Calu3 (cell line): ENCODE measurements at regions of chr2 and their contacts with region 1.

Region 1: GRCh38 chr2:136378712-136379595 is 261.0 kb upstream of the CXCR4 start:
- DNase-seq: peak; percentile 66
- H3K4me3 Mint-ChIP-seq: no peak overlapping the region
- H3K27ac Mint-ChIP-seq: no peak overlapping the region
- H3K4me1 Mint-ChIP-seq: no peaks in the 10 kb centered on the region
- H3K27me3 Mint-ChIP-seq: no peaks in the 10 kb centered on the region
- CTCF ChIP-seq: peak; percentile 70

Region 2: GRCh38 chr2:136013955-136014354 is 365.0 kb before region 1 on chr2:
- CTCF ChIA-PET with region 1: no interaction called
- intact Hi-C with region 1: loop called (anchors 2 kb)
- DNase-seq: peak; percentile 6
- H3K4me3 Mint-ChIP-seq: no peak overlapping the region
- H3K27ac Mint-ChIP-seq: no peak overlapping the region
- H3K4me1 Mint-ChIP-seq: peaks cover 19% of the 10 kb centered on the region
- H3K27me3 Mint-ChIP-seq: no peaks in the 10 kb centered on the region
- CTCF ChIP-seq: no peak

Region 3: DNA sequence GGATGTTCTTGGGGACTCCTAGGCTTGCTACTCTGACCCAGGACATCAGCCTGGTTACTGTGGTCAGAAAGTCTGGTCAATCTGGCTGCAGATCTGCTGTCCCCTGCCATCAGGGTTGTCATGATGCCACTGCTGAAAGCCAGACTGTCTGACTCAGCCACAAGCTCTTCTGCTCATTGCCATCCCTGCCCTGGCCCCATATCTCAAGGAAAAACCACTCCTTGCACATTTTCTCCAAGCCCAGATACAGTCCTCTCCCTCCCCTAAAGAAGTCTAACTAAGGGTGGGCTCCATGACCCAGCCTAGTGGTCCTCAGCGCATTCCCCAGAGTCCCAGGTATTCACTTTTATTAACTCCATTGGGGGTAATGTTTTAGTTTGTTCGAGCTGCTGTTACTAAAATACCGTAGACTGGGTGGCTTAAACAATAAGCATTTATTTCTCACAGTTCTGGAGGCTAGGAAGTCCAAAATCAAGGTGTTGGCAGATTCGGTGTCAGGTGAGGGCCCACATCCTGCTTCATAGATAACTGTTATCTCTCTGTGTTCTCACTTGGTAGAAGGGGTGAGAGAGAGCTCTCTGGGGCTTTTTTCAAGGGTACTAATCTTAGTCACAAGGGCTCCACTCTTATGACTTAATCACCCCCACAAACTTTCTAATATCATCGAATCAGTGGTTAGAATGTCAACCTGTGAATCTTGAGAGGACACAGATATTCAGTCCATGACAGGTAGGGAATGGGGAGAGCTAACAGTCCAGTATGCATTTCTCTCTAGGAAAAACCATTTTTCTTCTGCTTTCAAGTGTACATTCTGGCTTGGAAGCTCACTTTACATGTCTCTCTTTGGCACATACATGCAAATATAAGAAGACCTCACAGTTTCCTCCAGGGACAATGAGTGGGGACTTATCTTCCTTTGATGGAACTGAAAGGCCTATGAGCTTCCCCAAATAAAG is 166.3 kb before region 1 on chr2:
- CTCF ChIA-PET with region 1: no interaction called
- intact Hi-C with region 1: loop called (anchors 10 kb)
- DNase-seq: no peak
- H3K4me3 Mint-ChIP-seq: no peak overlapping the region
- H3K27ac Mint-ChIP-seq: no peak overlapping the region
- H3K4me1 Mint-ChIP-seq: peaks cover 44% of the 10 kb centered on the region
- H3K27me3 Mint-ChIP-seq: no peaks in the 10 kb centered on the region
- CTCF ChIP-seq: no peak

Region 4: DNA sequence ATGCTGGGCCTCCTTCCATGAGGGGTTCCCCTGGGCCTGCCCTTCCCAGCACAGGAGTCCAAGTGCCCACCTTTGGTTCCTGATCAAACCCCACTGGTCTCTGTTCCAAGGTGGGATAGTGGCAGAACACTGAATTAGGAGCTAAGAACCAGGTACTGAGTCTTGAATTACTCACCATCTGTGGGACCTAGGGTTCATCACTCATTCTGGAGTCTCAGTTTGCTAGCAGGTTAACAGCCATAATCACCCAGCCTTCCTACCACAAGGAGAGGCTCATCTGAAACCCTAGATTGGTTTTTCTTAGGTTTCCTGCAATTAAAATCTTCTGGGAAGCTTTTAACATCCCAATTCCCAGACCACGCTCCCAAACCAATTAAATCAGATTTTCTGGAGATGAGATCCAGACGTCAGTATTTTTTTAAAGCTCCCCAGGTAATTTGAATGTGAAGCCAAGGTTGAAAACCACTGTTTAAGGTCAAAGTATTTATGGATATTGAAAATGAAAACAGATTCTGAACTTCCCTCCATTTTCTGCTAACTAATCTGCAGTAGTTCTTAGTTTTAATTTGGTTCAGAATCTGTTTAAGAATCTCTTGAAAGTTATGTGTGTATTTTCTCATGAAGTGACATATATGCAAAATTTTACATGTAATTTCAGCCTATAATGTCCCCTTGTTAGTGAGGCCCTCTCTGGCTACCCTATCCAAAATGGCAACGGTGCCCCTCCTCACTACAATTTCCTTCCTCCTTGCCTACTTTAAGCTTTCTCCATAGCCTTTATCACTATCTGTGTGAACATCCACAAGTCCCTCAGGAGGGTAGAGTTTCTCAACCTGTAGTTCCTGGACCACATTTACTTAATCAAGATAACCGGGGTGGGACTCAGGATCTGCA is 94.5 kb before region 1 on chr2:
- CTCF ChIA-PET with region 1: no interaction called
- intact Hi-C with region 1: no loop called
- DNase-seq: no peak
- H3K4me3 Mint-ChIP-seq: no peak overlapping the region
- H3K27ac Mint-ChIP-seq: no peak overlapping the region
- H3K4me1 Mint-ChIP-seq: no peaks in the 10 kb centered on the region
- H3K27me3 Mint-ChIP-seq: peaks cover 19% of the 10 kb centered on the region
- CTCF ChIP-seq: no peak

Region 5: DNA sequence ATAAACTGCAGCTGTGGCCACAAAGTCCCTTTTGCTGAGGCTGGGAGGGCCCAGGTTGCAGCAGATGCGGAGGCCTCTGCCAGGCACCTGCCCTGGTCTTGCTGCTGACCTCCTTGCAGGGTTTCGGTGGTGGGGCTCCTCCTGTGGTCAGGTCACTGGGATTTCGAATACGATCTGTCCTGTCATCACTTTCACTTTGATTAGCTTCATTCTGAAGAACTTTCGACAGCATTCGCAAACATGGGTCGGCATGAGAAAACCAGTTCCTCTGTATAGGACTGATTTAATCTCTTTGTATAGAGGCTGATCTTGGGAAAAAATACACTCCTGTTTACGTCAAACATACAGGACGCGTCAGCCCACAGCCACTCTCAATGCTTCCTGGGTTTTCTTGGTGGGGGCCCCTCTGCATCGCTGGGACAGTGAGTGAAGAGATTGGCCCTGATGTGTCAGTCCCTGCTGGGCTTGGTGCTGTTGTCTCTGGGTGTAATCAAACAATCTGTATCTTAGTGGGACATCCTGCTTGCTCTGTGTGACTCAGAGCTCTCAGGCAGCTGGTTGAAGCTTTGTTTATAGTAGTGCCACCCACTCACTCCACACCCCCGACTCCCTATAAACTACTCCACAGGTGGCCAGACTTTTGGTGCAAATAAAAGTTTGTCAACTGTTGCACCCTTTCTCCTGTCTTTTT is 51.6 kb before region 1 on chr2:
- CTCF ChIA-PET with region 1: no interaction called
- intact Hi-C with region 1: no loop called
- DNase-seq: no peak
- H3K4me3 Mint-ChIP-seq: peak overlapping the region; percentile 15
- H3K27ac Mint-ChIP-seq: no peak overlapping the region
- H3K4me1 Mint-ChIP-seq: peaks cover 9% of the 10 kb centered on the region
- H3K27me3 Mint-ChIP-seq: no peaks in the 10 kb centered on the region
- CTCF ChIP-seq: no peak